ENCODE measurements at regions of chr7 and their contacts with region 1.

Region 1: GRCh38 chr7:1432411-1433082 is 26.7 kb downstream of the MICALL2 start:
- DNase-seq: peak; percentile 44 to 98 (median 78)
- ATAC-seq: peak; percentile 64 to 91 (median 86)
- H3K4me3 ChIP-seq: no peak overlapping the region
- H3K27ac ChIP-seq: no peak overlapping the region
- H3K4me1 ChIP-seq: no peaks in the 10 kb centered on the region
- H3K27me3 ChIP-seq: peaks cover 0 to 11% (median 0%) of the 10 kb centered on the region in 4 donors
- CTCF ChIP-seq: peak; percentile 97 to 99 (median 98)

Region 2: GRCh38 chr7:954330-955238 is 478.0 kb before region 1 on chr7 and contains the start of gene ADAP1:
- intact Hi-C with region 1: no loop called
- DNase-seq: peak in 3 of 6 donors; percentile 47 to 83 (median 77)
- ATAC-seq: peak; percentile 29 to 75 (median 68)
- H3K4me3 ChIP-seq: peak within 1 kb of the TSS; percentile 21 to 66 (median 38)
- H3K27ac ChIP-seq: peak within 1 kb of the TSS in 2 of 4 donors; percentile 12 to 30
- H3K4me1 ChIP-seq: peaks cover 0 to 8% (median 0%) of the 10 kb centered on the region in 3 donors
- H3K27me3 ChIP-seq: no peaks in the 10 kb centered on the region
- CTCF ChIP-seq: no peak
- total RNA-seq, gene ADAP1: 10.9 to 15.0 (median 13.7) TPM

Region 3: GRCh38 chr7:1193593-1194424 is 238.7 kb before region 1 on chr7:
- intact Hi-C with region 1: loop called in 2 of 3 experiments (anchors 10 kb)
- DNase-seq: peak in 5 of 6 donors; percentile 36 to 86 (median 66)
- ATAC-seq: peak; percentile 74 to 97 (median 96)
- H3K4me3 ChIP-seq: no peak overlapping the region
- H3K27ac ChIP-seq: no peak overlapping the region
- H3K4me1 ChIP-seq: no peaks in the 10 kb centered on the region
- H3K27me3 ChIP-seq: peaks cover 0 to 4% (median 0%) of the 10 kb centered on the region in 4 donors
- CTCF ChIP-seq: peak in 3 of 4 donors; percentile 14 to 29 (median 25)

Measured in pancreas (tissue), 10 donors.